Panc1 (cell line): ENCODE measurements at regions of chr6 and their contacts with region 1.

Region 1: GRCh38 chr6:53956068-53956711 is 155.1 kb upstream of the MLIP start:
- DNase-seq: peak; percentile 43
- ATAC-seq: peak; percentile 98
- H3K4me3 ChIP-seq: no peak overlapping the region
- H3K27ac ChIP-seq: no peak overlapping the region
- H3K4me1 ChIP-seq: peaks cover 2% of the 10 kb centered on the region; the same call in 1 of the 2 replicates
- H3K27me3 ChIP-seq: peaks cover 3% of the 10 kb centered on the region; the same call in 1 of the 2 replicates
- CTCF ChIP-seq: peak; percentile 89

Region 2: GRCh38 chr6:53492860-53493634 is 463.1 kb before region 1 on chr6:
- CTCF ChIA-PET with region 1: interaction called, 5 read pairs
- POLR2A ChIA-PET with region 1: no interaction called
- in situ Hi-C with region 1: no loop called
- intact Hi-C with region 1: loop called (anchors 5 kb)
- DNase-seq: peak; percentile 58
- ATAC-seq: peak; percentile 92
- H3K4me3 ChIP-seq: peak overlapping the region; percentile 24 to 44
- H3K27ac ChIP-seq: peak overlapping the region; percentile 44; the same call in 1 of the 2 replicates
- H3K4me1 ChIP-seq: peaks cover 4% of the 10 kb centered on the region; the same call in 1 of the 2 replicates
- H3K27me3 ChIP-seq: no peaks in the 10 kb centered on the region
- CTCF ChIP-seq: peak; percentile 78

Region 3: GRCh38 chr6:53734473-53735299 is 221.5 kb before region 1 on chr6:
- CTCF ChIA-PET with region 1: interaction called, 15 read pairs
- POLR2A ChIA-PET with region 1: no interaction called
- in situ Hi-C with region 1: no loop called
- intact Hi-C with region 1: no loop called
- DNase-seq: peak; percentile 92
- ATAC-seq: peak; percentile 97
- H3K4me3 ChIP-seq: peak overlapping the region; percentile 1 to 12; a peak in 3 of 4 replicates
- H3K27ac ChIP-seq: peak overlapping the region; percentile 89
- H3K4me1 ChIP-seq: peaks cover 43% of the 10 kb centered on the region
- H3K27me3 ChIP-seq: no peaks in the 10 kb centered on the region
- CTCF ChIP-seq: peak; percentile 88

Region 4: DNA sequence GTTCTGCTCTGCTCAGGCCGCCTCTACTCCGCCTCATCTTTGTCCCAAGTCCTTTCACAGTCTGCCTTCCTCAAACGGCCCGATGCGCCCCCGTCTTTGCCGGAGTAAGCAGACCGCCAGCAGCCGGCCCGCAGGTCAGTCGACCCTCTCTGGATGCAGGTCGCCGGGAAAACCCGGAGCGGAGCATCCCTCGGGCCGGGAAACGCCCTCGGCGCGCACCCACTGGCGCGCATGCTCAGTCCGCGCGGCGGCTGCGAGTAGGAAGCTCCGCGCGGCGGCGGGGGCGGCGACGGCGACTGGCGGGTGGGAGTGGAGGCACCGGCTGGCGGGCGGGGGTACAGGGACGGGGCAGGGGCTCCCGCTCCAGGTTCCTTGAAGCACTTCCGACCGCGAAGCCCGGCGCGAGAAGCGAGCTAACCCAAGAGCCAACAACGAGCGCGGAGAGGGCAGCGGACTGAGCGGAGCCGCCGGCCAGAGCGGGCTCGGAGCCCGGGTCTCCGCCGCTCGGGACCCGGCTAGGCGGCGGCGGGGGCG is 161.4 kb before region 1 on chr6 and contains the start of gene LRRC1:
- CTCF ChIA-PET with region 1: interaction called, 26 read pairs
- POLR2A ChIA-PET with region 1: interaction called, 3 read pairs
- in situ Hi-C with region 1: no loop called
- intact Hi-C with region 1: loop called (anchors 5 kb)
- DNase-seq: peak; percentile 58
- ATAC-seq: peak; percentile 87
- H3K4me3 ChIP-seq: peak within 1 kb of the TSS; percentile 72 to 88
- H3K27ac ChIP-seq: peak within 1 kb of the TSS; percentile 64
- H3K4me1 ChIP-seq: peaks cover 19% of the 10 kb centered on the region
- H3K27me3 ChIP-seq: no peaks in the 10 kb centered on the region
- CTCF ChIP-seq: no peak
- total RNA-seq, gene LRRC1: 13.8 TPM

Region 5: DNA sequence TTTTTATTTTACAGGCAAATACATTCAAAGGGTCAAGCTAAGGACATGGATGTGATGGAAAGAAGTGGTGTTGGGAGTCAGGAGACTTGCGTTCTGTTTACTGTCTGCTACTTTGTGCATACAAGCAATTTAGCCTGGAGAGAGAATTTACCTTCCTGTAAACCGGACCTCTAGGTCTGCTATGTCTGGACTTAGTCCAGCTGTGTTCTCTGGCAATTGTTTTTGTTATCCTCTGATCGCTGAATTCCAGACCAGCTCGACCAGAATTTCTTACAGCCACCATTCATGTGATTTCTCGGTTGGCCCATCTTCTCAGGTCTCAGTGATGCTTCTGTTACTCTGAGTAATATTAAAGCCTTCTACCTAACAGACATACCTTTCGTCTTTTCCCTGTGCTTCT is 86.2 kb before region 1 on chr6:
- CTCF ChIA-PET with region 1: no interaction called
- POLR2A ChIA-PET with region 1: no interaction called
- in situ Hi-C with region 1: no loop called
- intact Hi-C with region 1: no loop called
- DNase-seq: no peak
- ATAC-seq: peak; percentile 54; the same call in 1 of the 2 replicates
- H3K4me3 ChIP-seq: no peak overlapping the region
- H3K27ac ChIP-seq: no peak overlapping the region
- H3K4me1 ChIP-seq: no peaks in the 10 kb centered on the region; the same call in 1 of the 2 replicates
- H3K27me3 ChIP-seq: no peaks in the 10 kb centered on the region
- CTCF ChIP-seq: no peak